SK-N-SH (cell line): ENCODE measurements at regions of chr1 and their contacts with region 1.

Region 1: GRCh38 chr1:154772606-154773506 is 97.2 kb downstream of the KCNN3 start:
- DNase-seq: no peak
- H3K4me3 ChIP-seq: no peak overlapping the region
- H3K27ac ChIP-seq: no peak overlapping the region
- H3K4me1 ChIP-seq: peaks cover 0 to 23% of the 10 kb centered on the region in 2 experiments; a peak in 1 of 4 replicates
- H3K27me3 ChIP-seq: peaks cover 4% of the 10 kb centered on the region; the same call in 1 of the 2 replicates
- CTCF ChIP-seq: no peak
- EP300 ChIP-seq: no peak
- RAD21 ChIP-seq: no peak

Region 2: GRCh38 chr1:154856049-154856448 is 83.2 kb after region 1 on chr1:
- CTCF ChIA-PET with region 1: interaction called, 11 read pairs
- POLR2A ChIA-PET with region 1: no interaction called
- DNase-seq: peak; percentile 56
- H3K4me3 ChIP-seq: no peak overlapping the region
- H3K27ac ChIP-seq: no peak overlapping the region; a peak in 1 of 4 replicates
- H3K4me1 ChIP-seq: peaks cover 0 to 23% of the 10 kb centered on the region in 2 experiments; a peak in 1 of 4 replicates
- H3K27me3 ChIP-seq: no peaks in the 10 kb centered on the region
- CTCF ChIP-seq: no peak
- EP300 ChIP-seq: peak in 1 of 2 experiments; percentile 21; a peak in 1 of 4 replicates
- RAD21 ChIP-seq: peak; percentile 37; the same call in 1 of the 2 replicates

Region 3: DNA sequence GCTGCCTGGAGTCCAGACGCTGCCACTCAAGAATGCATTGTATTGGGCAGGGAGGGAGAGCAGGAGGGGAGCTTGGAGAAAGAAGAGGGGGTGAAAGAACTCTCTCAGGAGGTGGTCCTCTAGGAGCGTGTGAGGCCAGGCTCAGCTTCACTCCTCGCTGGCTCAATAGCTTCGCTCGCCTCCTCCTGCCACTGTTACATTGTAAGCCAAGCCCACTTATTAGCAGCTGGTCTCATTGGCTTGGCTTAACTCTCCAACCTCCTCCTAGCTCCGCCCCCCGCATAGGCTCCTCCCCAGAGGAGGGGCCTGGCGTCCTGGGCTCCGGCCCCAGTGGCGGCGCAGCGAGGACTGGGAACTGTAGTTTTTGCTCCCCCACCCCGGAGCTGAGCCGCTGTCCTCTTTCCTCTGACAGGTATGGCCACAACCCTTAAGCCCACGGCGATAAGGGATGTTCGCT is 97.3 kb after region 1 on chr1 and contains the start of gene KCNN3:
- CTCF ChIA-PET with region 1: interaction called, 16 read pairs
- POLR2A ChIA-PET with region 1: no interaction called
- DNase-seq: peak; percentile 96
- H3K4me3 ChIP-seq: peak within 1 kb of the TSS; percentile 37 to 59
- H3K27ac ChIP-seq: no peak within 1 kb of the TSS; a peak in 1 of 4 replicates
- H3K4me1 ChIP-seq: peaks cover 14 to 40% of the 10 kb centered on the region in 2 experiments
- H3K27me3 ChIP-seq: peaks cover 8% of the 10 kb centered on the region; the same call in 1 of the 2 replicates
- CTCF ChIP-seq: no peak
- EP300 ChIP-seq: no peak
- RAD21 ChIP-seq: no peak; the same call in 1 of the 2 replicates
- polyA plus RNA-seq, gene KCNN3: 0.10 and 0.16 TPM in 2 replicates